Activated CD4-positive, alpha-beta T cell treated with anti-CD3 and anti-CD28 coated beads, Interleukin-2, amount 10 ng/mL, durations not matched to agents 7 days and 5 days (primary cell): ENCODE measurements at regions of chr16 and their contacts with region 1.

Region 1: GRCh38 chr16:28504707-28505409 is 1.8 kb downstream of the IL27 start:
- DNase-seq: no peak
- H3K4me3 Mint-ChIP-seq: no peak overlapping the region
- H3K27ac Mint-ChIP-seq: no peak overlapping the region
- H3K4me1 Mint-ChIP-seq: peaks cover 24% of the 10 kb centered on the region
- H3K27me3 Mint-ChIP-seq: no peaks in the 10 kb centered on the region

Region 2: GRCh38 chr16:28494121-28494851 is 10.6 kb before region 1 on chr16 and contains the start of gene APOBR:
- CTCF ChIA-PET with region 1: interaction called, 18 read pairs
- POLR2A ChIA-PET with region 1: no interaction called
- DNase-seq: peak; percentile 94
- H3K4me3 Mint-ChIP-seq: peak within 1 kb of the TSS; percentile 89
- H3K27ac Mint-ChIP-seq: peak within 1 kb of the TSS; percentile 100
- H3K4me1 Mint-ChIP-seq: peaks cover 49% of the 10 kb centered on the region
- H3K27me3 Mint-ChIP-seq: no peaks in the 10 kb centered on the region
- total RNA-seq, gene APOBR: 16.7 to 21.4 TPM